ENCODE measurements at regions of chr15 and their contacts with region 1.

Region 1: GRCh38 chr15:74906446-74907162 is at the start of gene FAM219B:
- DNase-seq: peak; percentile 91
- ATAC-seq: peak; percentile 91 to 95
- H3K4me3 ChIP-seq: peak within 1 kb of the TSS; percentile 62 to 100 (median 87)
- H3K27ac ChIP-seq: peak within 1 kb of the TSS; percentile 84 to 96 (median 95)
- H3K4me1 ChIP-seq: peaks cover 12 to 23% of the 10 kb centered on the region in 2 donors
- H3K27me3 ChIP-seq: no peaks in the 10 kb centered on the region
- CTCF ChIP-seq: no peak
- POLR2A ChIP-seq: peak; percentile 90 to 95
- total RNA-seq, gene FAM219B: 28.2 to 32.9 (median 31.2) TPM

Region 2: DNA sequence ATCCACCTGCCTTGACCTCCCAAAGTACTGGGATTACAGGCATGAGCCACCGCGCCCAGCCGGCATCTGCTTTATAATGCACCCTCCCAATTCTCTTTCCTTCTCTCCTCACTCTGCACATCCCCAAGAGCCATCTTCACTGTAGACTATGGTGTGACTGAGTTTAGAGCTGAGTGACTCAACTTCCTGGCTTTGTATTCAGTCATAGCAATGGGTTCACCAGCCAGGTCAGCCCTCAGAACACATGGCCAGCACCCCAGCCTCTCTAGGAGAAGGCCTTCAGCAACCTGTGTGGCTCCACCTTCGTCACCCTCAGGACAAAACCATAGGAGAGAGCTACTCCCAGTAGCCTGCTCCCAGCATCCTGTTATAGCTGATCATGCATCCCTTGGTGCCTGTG is 332.6 kb before region 1 on chr15:
- in situ Hi-C with region 1: no loop called
- intact Hi-C with region 1: no loop called
- DNase-seq: no peak
- ATAC-seq: no peak
- H3K4me3 ChIP-seq: no peak overlapping the region
- H3K27ac ChIP-seq: no peak overlapping the region
- H3K4me1 ChIP-seq: peaks cover 15% of the 10 kb centered on the region in 2 donors
- H3K27me3 ChIP-seq: no peaks in the 10 kb centered on the region
- CTCF ChIP-seq: no peak
- POLR2A ChIP-seq: no peak

Region 3: DNA sequence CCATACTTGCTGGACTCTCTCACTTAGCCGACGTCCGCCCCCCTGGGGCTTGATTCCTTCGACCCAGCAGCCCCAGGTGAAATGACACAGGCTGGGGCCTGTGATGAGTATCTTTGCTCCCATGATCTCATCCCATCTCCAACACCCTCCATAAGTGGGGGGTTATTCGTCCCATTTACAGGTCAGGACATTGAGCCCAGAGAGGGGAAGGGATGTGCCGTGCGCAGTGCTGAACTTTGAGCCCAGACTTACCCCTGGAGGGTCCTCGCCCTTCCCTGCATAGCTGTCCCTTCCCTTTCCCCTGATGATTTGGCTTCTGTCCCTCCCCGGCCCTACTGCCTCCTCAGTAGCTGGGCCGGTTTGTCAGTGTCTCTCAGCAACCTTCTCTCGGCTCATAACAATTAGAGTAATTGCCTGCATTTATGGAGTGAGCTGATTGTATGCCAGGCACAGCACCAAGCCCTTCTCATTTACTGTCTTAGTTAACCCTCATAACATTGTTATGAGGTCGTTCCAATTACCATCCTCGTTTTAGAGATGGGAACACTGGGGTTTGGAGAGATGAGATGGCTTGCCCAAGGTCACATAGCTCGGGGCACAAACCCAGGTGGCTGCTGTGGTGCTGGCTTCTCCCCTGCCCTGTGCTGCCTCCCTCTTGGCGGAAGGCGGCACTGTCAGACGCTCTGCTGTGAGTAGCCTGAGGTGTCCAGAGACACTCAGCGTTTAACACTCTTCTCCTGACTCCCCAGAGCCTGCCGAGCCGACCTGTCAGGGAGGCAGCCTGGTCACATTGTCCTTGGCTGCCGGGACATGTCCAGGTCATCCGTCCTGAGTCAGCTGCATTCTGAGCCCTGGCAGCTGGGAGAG is 89.6 kb before region 1 on chr15:
- in situ Hi-C with region 1: no loop called
- intact Hi-C with region 1: loop called (anchors 1 kb)
- DNase-seq: peak; percentile 80 to 84
- ATAC-seq: peak; percentile 94 to 95
- H3K4me3 ChIP-seq: no peak overlapping the region
- H3K27ac ChIP-seq: peak overlapping the region; percentile 59 to 82 (median 68)
- H3K4me1 ChIP-seq: peaks cover 5 to 6% of the 10 kb centered on the region in 2 donors
- H3K27me3 ChIP-seq: no peaks in the 10 kb centered on the region
- CTCF ChIP-seq: peak in 4 of 5 experiments; percentile 8 to 59 (median 52)
- POLR2A ChIP-seq: no peak

Region 4: DNA sequence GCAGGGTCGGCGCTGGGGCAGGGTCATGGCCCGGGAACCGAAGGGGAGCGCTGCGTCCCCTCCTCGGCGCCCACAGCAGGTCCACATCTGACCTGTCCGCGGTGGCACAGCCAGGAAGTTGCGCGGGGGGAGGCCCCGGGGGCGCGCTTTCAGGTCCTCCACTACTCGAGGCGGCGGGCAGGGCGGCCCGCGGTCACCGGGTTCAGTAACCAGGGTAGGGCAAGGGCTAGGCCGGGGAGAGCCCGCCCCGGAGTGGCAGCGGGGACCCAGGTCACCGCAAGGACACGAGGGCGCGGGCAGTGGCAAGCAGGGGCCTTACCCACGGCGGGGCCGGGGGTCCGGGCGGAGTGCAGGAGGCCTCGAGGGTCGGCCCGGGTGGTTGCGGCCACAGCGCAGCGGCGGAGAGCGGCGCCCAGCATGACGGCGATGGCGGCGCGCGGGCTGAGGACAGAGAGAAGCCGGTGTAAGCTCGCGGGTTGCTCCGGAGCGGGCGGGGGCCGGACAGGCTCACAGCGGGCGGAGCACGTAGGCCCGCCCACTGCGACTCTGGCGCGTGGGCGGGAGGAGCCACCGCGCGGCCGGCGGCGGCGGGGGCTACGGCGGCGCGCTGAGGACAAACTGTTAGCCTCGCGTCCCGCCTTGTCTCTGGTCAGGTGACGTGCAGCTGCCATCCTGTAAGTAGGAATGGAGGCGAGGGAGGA is 31.1 kb after region 1 on chr15 and contains the start of gene COX5A:
- in situ Hi-C with region 1: no loop called
- intact Hi-C with region 1: loop called (anchors 1 kb)
- DNase-seq: peak; percentile 92 to 96
- ATAC-seq: peak; percentile 94 to 95
- H3K4me3 ChIP-seq: peak within 1 kb of the TSS; percentile 74 to 93 (median 90)
- H3K27ac ChIP-seq: peak within 1 kb of the TSS; percentile 96 to 100 (median 96)
- H3K4me1 ChIP-seq: peaks cover 32 to 35% of the 10 kb centered on the region in 2 donors
- H3K27me3 ChIP-seq: no peaks in the 10 kb centered on the region
- CTCF ChIP-seq: peak in 1 of 5 experiments; percentile 17
- POLR2A ChIP-seq: peak; percentile 91 to 93
- total RNA-seq, gene COX5A: 425 to 558 (median 512) TPM